Heart right ventricle (tissue), 16 donors: ENCODE measurements at regions of chr4 and their contacts with region 1.

Region 1: DNA sequence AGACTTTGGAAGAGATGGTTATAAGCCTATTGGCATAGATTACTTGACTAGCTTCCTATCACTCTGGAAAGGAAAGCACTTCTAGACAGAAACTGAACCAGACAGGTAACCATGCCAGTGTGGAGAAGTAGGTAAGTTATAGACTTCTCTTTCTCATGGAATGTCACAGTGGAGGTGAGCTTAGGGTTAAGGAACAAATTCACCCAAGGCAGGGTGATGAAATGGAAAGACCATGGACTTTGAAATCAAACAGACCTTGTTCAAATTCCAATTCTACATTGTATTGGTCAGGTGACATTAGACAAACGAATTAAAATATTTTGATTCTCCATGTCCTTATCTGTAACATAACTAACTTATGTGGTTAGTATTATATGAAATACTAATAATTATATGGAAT is 7.7 kb upstream of the RAP1GDS1 start:
- DNase-seq: no peak
- ATAC-seq: no peak
- H3K4me3 ChIP-seq: no peak overlapping the region
- H3K27ac ChIP-seq: no peak overlapping the region
- H3K4me1 ChIP-seq: no peaks in the 10 kb centered on the region
- H3K27me3 ChIP-seq: no peaks in the 10 kb centered on the region
- CTCF ChIP-seq: no peak

Region 2: DNA sequence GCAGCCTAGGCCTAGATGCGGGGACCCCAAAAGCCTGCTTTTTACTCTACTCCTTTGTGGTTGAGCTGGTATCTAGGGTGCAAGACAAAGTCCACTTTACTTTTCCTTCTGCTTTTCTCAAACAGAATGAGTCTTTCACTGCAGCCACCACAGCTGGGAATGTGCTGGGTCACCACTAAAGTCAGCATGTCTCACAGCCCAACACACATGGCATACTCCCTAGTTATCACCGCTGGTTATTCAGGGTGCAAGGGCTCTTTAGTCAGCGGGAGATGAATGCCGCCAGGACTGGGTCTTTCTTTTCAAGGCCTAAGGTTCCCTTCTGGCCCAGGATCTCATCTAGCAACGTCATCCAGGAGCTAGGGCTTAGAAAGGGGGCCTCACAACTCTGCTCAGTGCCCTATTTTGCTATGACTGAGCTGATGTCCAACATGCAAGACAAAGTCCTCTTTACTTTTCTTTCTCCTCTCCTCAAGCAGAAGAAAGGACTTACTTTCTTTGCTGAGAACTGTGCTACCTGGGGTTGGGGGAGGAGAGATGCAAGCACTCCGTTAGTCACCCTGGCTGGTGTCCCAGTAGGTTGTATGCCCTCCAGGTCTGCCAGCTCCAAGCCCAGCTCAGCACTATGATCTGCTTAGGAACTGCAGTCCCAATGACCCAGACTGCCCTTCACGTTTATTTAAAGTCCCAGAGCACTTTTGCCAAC is 87.3 kb before region 1 on chr4:
- intact Hi-C with region 1: loop called in 1 of 10 experiments (anchors 10 kb)
- DNase-seq: peak; percentile 62
- ATAC-seq: peak; percentile 89 to 99 (median 98)
- H3K4me3 ChIP-seq: no peak overlapping the region
- H3K27ac ChIP-seq: peak overlapping the region in 4 of 10 donors; percentile 9 to 63 (median 42)
- H3K4me1 ChIP-seq: peaks cover 0 to 5% (median 0%) of the 10 kb centered on the region in 9 donors
- H3K27me3 ChIP-seq: no peaks in the 10 kb centered on the region
- CTCF ChIP-seq: no peak